ENCODE measurements at regions of chr2 and their contacts with region 1.

Region 1: GRCh38 chr2:11764359-11764758 is 17.9 kb downstream of the LPIN1 start:
- DNase-seq: no peak
- H3K4me3 ChIP-seq: no peak overlapping the region
- H3K27ac ChIP-seq: no peak overlapping the region
- H3K4me1 ChIP-seq: peaks cover 8 to 65% (median 38%) of the 10 kb centered on the region in 4 experiments
- H3K27me3 ChIP-seq: no peaks in the 10 kb centered on the region

Region 2: DNA sequence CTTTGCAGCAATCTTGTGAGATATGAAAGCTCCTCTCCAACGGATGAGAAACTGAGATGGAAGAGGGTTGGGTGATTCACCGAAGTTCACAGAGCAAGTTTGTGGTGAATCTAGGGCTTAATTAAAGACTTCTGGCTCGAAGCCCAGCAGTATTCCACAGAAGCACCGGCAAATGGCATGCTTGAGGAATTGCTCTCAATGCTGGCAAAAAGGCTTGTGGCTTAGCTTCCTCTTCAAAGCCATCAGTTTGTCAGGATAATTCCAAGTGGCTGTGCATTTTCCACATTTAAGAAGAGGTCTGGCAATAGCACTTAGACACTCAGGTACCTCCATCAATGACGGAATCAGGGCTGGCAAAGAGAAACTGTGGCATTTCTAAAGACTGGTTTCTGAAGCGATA is 707.7 kb before region 1 on chr2:
- CTCF ChIA-PET with region 1: no interaction called
- POLR2A ChIA-PET with region 1: no interaction called
- DNase-seq: no peak
- H3K4me3 ChIP-seq: no peak overlapping the region
- H3K27ac ChIP-seq: no peak overlapping the region
- H3K4me1 ChIP-seq: no peaks in the 10 kb centered on the region
- H3K27me3 ChIP-seq: peaks cover 0 to 6% (median 0%) of the 10 kb centered on the region in 5 experiments

Region 3: DNA sequence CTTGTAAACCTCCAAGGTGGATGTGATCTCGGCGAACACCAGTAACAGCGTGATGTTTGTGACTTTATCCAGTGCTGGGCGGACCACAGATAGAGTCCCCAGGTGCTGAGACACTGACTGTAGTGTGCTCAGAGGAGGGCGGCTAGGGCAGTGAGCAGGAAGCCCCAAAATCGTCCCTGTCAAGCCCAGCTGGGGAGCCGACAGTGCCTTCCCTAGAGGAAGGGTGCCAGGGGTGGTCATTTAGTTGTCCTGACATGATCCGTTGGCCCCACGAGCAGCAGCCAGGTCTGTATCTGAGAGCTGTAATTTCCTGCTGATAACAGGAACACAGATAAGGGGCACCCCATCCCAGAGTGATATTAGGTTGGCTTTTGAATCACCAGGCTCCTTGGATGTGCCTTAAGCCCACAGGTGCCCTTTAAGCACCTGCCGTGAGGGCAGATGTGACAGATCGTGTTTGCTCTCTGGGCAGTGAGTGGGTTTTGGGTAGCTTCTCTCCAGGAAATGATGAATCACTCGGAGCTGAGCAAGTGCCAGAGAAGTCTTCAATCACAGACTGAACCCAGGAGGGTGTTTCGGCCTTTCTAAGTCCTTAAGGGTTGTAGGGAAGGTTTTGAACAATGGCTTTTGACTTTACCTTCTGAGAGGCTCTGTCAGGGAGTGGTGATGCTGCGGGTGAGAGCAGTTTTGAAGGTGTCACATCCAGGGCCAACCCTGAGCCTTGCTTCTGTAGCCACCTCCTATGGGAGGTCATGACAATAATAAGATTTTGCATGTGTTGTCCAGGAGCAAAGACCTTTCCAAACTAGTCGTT is 10.3 kb before region 1 on chr2:
- CTCF ChIA-PET with region 1: interaction called, 207 read pairs
- POLR2A ChIA-PET with region 1: interaction called, 27 read pairs
- DNase-seq: peak; percentile 71 to 94 (median 91)
- H3K4me3 ChIP-seq: peak overlapping the region; percentile 3 to 69 (median 56)
- H3K27ac ChIP-seq: peak overlapping the region; percentile 91 to 93
- H3K4me1 ChIP-seq: peaks cover 37 to 93% (median 85%) of the 10 kb centered on the region in 4 experiments
- H3K27me3 ChIP-seq: no peaks in the 10 kb centered on the region

Region 4: GRCh38 chr2:11778923-11779757 is 14.8 kb after region 1 on chr2:
- CTCF ChIA-PET with region 1: interaction called, 24 read pairs
- POLR2A ChIA-PET with region 1: no interaction called
- DNase-seq: peak; percentile 75 to 85 (median 81)
- H3K4me3 ChIP-seq: peak overlapping the region in 3 of 7 experiments; percentile 50 to 69 (median 52)
- H3K27ac ChIP-seq: no peak overlapping the region
- H3K4me1 ChIP-seq: peaks cover 8 to 41% (median 25%) of the 10 kb centered on the region in 4 experiments
- H3K27me3 ChIP-seq: no peaks in the 10 kb centered on the region

Region 5: GRCh38 chr2:11784747-11785610 is 20.6 kb after region 1 on chr2:
- CTCF ChIA-PET with region 1: interaction called, 12 read pairs
- POLR2A ChIA-PET with region 1: no interaction called
- DNase-seq: peak; percentile 21 to 45 (median 37)
- H3K4me3 ChIP-seq: no peak overlapping the region
- H3K27ac ChIP-seq: no peak overlapping the region
- H3K4me1 ChIP-seq: no peaks in the 10 kb centered on the region
- H3K27me3 ChIP-seq: no peaks in the 10 kb centered on the region